ENCODE measurements at regions of chr9 and their contacts with region 1.

Region 1: GRCh38 chr9:115013998-115014397 is 83.6 kb upstream of the TNFSF8 start:
- DNase-seq: peak; percentile 76
- ATAC-seq: peak; percentile 88

Region 2: GRCh38 chr9:114405294-114406034 is 608.5 kb before region 1 on chr9:
- intact Hi-C with region 1: loop called (anchors 5 kb)
- DNase-seq: peak; percentile 74
- ATAC-seq: peak; percentile 96

Region 3: DNA sequence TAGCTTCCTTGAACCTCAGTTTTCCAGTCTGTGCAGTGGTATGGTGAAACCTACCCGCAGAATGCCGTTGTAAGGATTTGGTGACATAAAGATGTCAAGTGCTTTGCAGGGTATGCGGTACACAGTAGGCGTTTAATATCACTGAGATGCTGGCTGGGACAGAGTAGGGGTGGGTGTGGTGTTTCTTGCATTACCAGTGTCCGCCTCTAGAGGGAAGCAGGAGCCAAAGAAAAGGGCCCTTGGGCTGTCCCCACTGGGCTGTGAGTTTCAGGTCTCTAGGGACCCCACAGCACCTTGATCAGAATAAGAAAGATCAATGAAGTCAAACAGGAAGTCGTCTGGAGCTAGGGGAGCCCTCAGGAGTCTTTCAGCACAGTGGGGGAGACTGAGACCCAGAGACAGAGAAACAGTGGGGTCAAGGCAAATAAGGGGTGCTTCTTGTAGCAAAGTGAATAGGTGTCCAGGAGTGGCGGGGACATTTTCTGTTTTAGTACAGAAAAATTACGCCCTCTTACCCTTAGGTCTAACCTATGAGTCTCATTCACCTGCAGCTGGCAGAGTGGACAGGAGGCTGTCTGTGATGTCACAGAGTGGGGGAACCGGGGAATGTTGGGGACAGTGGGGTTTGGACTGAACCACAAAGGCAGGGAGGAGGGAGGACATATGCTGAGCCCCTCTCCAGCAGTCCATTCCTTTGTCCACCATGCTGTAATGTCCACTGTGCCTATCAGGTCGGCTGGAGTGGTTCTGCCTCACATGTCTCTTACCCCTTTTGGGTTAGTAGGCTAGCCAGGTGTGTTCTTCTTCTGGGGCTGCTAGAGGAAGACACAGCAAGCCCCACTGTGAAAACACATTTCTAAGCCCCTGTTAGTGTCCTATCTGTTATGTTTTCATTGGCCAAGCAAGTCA is 351.7 kb before region 1 on chr9:
- intact Hi-C with region 1: loop called (anchors 5 kb)
- DNase-seq: no peak
- ATAC-seq: peak; percentile 68

Region 4: DNA sequence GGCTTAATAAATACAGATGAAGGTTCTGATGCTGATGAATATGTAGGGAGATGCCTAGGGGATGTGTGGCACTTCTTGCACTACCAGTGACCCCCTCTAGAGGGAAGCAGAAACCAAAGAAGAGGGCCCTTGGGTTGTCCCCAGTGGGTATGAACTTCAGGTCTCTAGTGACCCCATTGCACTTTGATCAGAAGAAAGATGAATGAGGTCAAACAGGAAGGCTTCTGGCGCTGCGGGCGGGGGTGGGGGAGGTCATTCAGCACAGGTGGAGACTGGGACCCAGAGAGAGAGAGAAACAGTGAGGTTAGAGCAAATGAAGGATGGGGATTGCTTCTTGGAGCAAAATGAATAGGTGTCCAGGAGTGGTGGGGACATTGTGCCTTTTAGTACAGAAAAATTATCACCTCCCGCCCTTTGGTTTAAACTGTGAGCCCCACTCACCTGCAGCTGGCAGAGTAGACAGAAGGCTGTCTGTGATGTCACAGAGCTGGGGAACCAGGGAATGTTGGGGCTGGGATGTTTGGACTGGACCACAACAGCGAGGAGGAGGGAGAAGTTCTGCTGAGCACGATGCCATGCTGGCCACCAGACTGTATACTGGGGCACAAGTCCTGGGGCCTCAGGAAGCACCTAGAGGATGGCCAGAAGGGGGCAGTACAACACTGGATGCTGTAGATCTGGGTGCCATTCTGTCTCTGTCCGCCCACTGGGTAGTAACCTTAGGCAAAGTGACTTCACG is 332.2 kb before region 1 on chr9 and contains the start of gene TEX48:
- intact Hi-C with region 1: loop called (anchors 5 kb)
- DNase-seq: peak; percentile 45
- ATAC-seq: peak; percentile 68
- total RNA-seq, gene TEX48: not detected

Region 5: DNA sequence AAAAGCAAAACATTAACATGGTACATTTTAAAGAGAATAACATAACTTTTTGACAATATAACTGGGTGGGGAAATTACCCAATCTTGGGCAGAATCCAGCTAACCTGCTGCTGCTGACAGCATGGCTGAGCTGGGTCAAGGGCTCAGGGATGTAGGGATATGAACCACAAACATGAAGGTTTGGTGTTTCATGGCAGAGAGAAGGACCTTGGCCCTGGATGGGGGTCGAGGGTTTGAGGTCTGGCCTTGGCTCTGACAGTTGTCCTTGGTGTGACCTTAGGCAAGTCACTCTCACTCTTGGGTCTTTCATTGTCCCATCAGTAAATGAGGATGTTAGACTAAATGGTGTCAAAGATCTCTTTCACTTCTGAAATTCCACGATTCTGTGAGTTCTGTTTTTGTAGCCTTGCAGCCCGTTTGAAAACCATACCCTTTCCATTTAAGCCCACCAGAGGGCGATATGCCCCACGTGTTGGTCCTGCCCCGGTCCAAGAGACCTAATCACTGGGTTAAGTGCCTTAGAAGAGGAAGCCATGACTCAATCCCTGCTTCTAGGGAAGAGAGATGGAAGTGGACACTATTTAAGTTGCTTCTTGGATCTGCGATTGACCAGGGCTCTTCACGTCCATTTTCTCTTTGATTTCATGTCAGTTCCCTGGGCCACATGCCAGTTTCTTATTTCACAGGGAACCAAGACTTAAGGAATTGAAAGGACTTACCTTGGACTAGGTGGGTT is 275.2 kb before region 1 on chr9:
- intact Hi-C with region 1: loop called (anchors 2 kb)
- DNase-seq: peak; percentile 54
- ATAC-seq: peak; percentile 91

Region 6: DNA sequence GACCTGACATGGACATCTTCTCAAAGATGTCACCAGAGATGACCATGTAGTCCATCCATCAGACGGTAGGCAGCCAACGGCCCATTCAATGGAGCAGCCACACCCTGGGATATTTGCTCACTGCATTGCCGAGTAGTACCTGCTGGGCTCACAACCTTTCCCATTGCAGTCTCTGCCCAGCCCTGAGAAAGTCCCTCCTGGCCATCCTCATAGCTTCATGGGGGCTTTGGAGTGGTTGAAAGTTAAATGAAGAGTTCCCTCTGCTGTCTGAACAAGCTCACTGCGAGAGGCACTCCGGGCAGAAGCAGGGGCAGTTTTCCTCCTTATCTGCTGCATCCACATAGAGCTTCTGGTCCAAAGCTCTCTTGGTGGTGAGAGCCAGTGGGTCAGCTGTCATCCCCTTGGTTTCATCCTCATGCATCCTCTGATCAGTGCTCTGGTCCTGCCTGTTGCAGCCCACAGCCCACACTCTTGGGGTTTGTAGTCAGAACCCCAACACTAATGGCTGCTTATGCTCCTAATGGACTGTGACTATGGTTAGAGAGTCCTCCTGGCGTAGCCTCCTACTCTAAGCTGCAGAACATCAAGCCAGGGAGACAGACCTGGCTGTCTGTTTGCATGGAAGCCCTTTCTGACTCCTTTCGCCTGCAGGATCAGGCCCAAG is 107.0 kb before region 1 on chr9:
- intact Hi-C with region 1: loop called (anchors 10 kb)
- DNase-seq: no peak
- ATAC-seq: no peak